ENCODE measurements at regions of chr1 and their contacts with region 1.

Region 1: GRCh38 chr1:1883092-1883873 is 7.6 kb downstream of the GNB1 start:
- DNase-seq: no peak
- ATAC-seq: no peak
- H3K4me3 ChIP-seq: no peak overlapping the region
- H3K4me3 Mint-ChIP-seq: peak overlapping the region; percentile 57
- H3K27ac ChIP-seq: no peak overlapping the region
- H3K27ac Mint-ChIP-seq: peak overlapping the region; percentile 71 to 86
- H3K4me1 ChIP-seq: peaks cover 75% of the 10 kb centered on the region
- H3K4me1 Mint-ChIP-seq: peaks cover 69 to 70% of the 10 kb centered on the region in 2 donors
- H3K27me3 ChIP-seq: no peaks in the 10 kb centered on the region
- H3K27me3 Mint-ChIP-seq: no peaks in the 10 kb centered on the region
- CTCF ChIP-seq: no peak

Region 2: GRCh38 chr1:1847061-1847850 is 36.0 kb before region 1 on chr1:
- intact Hi-C with region 1: loop called (anchors 5 kb)
- DNase-seq: no peak
- ATAC-seq: no peak
- H3K4me3 ChIP-seq: no peak overlapping the region
- H3K4me3 Mint-ChIP-seq: no peak overlapping the region
- H3K27ac ChIP-seq: no peak overlapping the region
- H3K27ac Mint-ChIP-seq: peak overlapping the region; percentile 71 to 87
- H3K4me1 ChIP-seq: peaks cover 35% of the 10 kb centered on the region
- H3K4me1 Mint-ChIP-seq: peaks cover 73% of the 10 kb centered on the region in 2 donors
- H3K27me3 ChIP-seq: no peaks in the 10 kb centered on the region
- H3K27me3 Mint-ChIP-seq: no peaks in the 10 kb centered on the region
- CTCF ChIP-seq: no peak

Region 3: DNA sequence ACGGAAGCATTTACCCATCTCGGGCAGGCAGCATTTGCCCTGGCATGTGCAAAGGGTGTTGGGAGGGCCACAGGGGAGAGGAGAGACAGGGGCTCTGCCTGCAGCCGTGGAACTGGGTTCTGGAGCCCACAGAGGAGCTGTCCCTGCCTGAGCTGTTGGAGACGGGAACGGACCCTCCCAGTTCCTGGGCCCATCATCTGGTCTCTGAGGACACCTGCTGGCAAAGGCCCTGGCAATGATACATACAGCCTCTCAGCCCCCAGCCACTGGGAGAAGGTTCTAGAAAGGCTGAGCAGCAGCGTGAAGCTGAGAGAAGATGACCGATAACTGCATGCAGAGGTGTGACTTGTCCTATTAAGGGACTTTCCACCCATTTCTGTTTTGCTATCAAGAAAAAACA is 279.9 kb after region 1 on chr1:
- intact Hi-C with region 1: no loop called
- DNase-seq: peak in 1 of 2 donors; percentile 42
- ATAC-seq: no peak
- H3K4me3 ChIP-seq: no peak overlapping the region
- H3K4me3 Mint-ChIP-seq: no peak overlapping the region
- H3K27ac ChIP-seq: no peak overlapping the region
- H3K27ac Mint-ChIP-seq: no peak overlapping the region
- H3K4me1 ChIP-seq: peaks cover 11% of the 10 kb centered on the region
- H3K4me1 Mint-ChIP-seq: peaks cover 6 to 16% of the 10 kb centered on the region in 2 donors
- H3K27me3 ChIP-seq: no peaks in the 10 kb centered on the region
- H3K27me3 Mint-ChIP-seq: no peaks in the 10 kb centered on the region
- CTCF ChIP-seq: no peak

Measured in natural killer cell (primary cell).